ENCODE measurements at regions of chr4 and their contacts with region 1.

Region 1: DNA sequence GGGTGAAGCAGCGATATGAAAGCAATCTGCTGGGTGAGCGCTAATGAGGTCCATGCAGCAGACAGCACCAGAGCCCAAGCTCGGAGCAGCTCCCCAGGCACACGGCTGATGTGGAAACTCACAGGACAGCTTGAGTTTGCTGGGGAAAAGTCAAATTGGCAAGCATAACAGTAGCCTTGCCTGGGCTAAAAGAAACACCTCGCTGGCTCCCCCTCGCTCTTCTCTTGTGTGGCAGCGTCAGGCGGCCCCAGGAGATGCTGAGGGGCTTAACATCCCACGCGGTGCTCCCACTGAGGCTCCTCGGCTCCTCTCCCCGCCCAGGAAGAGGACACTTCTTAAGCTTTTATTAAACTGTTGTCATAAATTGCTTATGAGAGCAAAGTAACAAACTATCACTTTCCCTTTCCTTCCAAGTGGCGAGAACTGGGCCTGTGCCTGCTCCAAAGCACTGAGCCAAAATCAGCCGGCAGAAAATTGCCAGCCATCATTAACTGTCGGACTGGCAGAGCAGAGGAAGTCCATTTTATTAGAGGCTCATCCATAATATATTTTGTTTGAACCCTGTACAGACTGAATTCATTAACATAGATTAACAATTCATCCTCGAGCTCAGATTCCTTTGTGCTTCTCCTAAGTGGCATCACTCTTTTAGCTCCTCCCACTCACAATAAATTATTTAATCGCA is 111.4 kb downstream of the TSPAN5 start:
- DNase-seq: no peak
- H3K4me3 ChIP-seq: no peak overlapping the region
- H3K27ac ChIP-seq: no peak overlapping the region
- H3K4me1 ChIP-seq: no peaks in the 10 kb centered on the region
- CTCF ChIP-seq: no peak

Region 2: GRCh38 chr4:98557194-98557892 is 10.3 kb after region 1 on chr4:
- CTCF ChIA-PET with region 1: no interaction called
- POLR2A ChIA-PET with region 1: interaction called, 12 read pairs
- intact Hi-C with region 1: no loop called
- DNase-seq: no peak
- H3K4me3 ChIP-seq: no peak overlapping the region
- H3K27ac ChIP-seq: no peak overlapping the region
- H3K4me1 ChIP-seq: no peaks in the 10 kb centered on the region
- CTCF ChIP-seq: no peak

Measured in OCI-LY7 (cell line).